HepG2 (cell line): ENCODE measurements at regions of chr14 and their contacts with region 1.

Region 1: GRCh38 chr14:76250302-76250701 is 98.6 kb downstream of the GPATCH2L start:
- DNase-seq: no peak
- ATAC-seq: no peak
- H3K4me3 ChIP-seq: no peak overlapping the region
- H3K27ac ChIP-seq: no peak overlapping the region
- H3K4me1 ChIP-seq: peaks cover 7% of the 10 kb centered on the region; the same call in 1 of the 2 replicates
- H3K27me3 ChIP-seq: no peaks in the 10 kb centered on the region
- CTCF ChIP-seq: no peak
- EP300 ChIP-seq: no peak
- POLR2A ChIP-seq: no peak
- RAD21 ChIP-seq: no peak

Region 2: DNA sequence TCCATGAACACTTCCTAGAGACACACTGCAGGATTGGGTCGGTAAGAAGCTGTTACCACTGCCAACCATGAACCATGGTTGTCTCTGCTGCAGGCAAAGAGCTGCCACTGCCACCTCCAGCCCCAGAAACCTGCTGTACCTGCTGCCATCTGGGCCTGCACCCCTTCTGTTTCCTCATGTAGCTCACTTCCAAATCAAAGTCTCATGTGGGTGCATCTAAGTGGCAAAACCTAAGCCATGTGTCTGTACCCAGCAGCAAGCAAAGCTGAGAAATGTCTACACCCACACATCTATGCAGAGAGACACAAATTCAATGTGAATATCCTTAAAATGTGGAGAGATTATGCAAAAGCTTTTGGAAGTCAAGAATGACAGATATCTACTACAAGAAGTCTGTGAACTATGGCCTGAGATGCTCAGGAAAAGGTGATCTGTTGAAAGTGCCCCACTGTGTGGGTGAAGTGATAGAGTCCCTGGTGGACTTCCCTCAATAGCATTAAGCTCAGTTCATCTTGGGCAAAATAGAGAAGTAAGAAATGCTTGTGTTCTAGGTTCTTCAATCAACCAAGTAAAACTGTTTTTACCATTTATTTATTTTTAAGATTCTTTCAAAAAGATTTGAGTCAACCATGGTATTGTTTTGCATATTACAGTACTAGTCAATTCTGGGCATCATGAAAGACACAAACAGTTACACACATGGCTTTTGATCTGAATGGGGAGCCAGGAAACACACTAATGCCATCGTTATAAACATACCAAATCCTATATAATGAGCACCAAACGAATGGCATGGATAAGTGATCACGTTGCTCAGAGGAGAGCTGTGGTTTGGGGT is 907.3 kb before region 1 on chr14:
- CTCF ChIA-PET with region 1: no interaction called
- POLR2A ChIA-PET with region 1: no interaction called
- in situ Hi-C with region 1: no loop called
- intact Hi-C with region 1: no loop called
- DNase-seq: no peak
- ATAC-seq: no peak
- H3K4me3 ChIP-seq: no peak overlapping the region
- H3K27ac ChIP-seq: no peak overlapping the region
- H3K4me1 ChIP-seq: no peaks in the 10 kb centered on the region
- H3K27me3 ChIP-seq: peaks cover 0 to 8% of the 10 kb centered on the region in 2 experiments; a peak in 1 of 5 replicates
- CTCF ChIP-seq: no peak
- EP300 ChIP-seq: no peak
- POLR2A ChIP-seq: no peak
- RAD21 ChIP-seq: no peak

Region 3: DNA sequence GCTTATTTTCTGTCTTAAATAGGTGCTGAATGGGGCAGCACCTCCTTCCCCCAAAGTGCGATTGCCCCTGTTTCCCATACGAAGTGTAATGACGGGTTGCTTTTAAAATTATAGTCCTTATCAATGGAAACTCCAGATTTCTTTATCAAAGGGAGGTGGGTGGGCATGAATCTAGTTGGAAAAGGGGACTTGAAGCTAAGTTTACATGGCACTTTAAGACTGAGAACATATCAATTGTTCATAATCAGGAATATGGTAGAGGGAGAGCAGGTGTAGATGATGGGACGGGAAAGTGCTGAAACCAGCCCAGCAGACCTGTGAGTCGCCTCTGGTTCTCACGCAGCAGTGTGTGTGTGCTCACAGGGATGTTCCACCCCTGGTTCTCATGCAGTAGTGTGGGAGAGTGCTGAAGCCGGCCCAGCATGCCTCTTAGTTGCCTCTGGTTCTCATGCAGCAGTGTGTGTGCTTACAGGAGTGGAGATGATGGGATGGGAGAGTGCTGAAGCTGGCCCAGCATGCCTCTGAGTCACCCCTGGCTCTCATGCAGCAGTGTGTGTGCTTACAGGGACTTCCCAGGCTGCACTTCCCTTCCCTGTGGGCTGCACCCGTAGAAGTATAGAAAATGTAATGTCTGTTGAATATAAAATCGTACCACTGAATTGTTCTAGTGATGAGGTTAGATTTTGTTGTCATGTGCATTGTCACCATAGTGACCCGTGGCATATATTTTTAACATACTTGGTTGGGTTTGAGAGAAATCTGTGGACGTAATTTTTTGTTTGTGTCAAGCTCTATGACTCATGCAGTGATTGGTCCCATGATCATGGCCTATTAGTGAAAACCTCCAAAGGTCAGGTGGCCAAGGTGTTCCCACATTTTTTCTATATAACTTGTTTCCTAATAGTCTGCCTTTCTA is 47.0 kb before region 1 on chr14:
- CTCF ChIA-PET with region 1: no interaction called
- POLR2A ChIA-PET with region 1: no interaction called
- in situ Hi-C with region 1: no loop called
- intact Hi-C with region 1: no loop called
- DNase-seq: no peak
- ATAC-seq: peak; percentile 77
- H3K4me3 ChIP-seq: no peak overlapping the region
- H3K27ac ChIP-seq: no peak overlapping the region
- H3K4me1 ChIP-seq: peaks cover 13% of the 10 kb centered on the region
- H3K27me3 ChIP-seq: no peaks in the 10 kb centered on the region
- CTCF ChIP-seq: no peak
- EP300 ChIP-seq: no peak
- POLR2A ChIP-seq: no peak
- RAD21 ChIP-seq: no peak

Region 4: GRCh38 chr14:76525106-76525821 is 275.0 kb after region 1 on chr14:
- CTCF ChIA-PET with region 1: no interaction called
- POLR2A ChIA-PET with region 1: no interaction called
- in situ Hi-C with region 1: no loop called
- intact Hi-C with region 1: no loop called
- DNase-seq: no peak
- ATAC-seq: no peak
- H3K4me3 ChIP-seq: no peak overlapping the region
- H3K27ac ChIP-seq: no peak overlapping the region
- H3K4me1 ChIP-seq: no peaks in the 10 kb centered on the region
- H3K27me3 ChIP-seq: peaks cover 0 to 10% of the 10 kb centered on the region in 2 experiments; a peak in 2 of 5 replicates
- CTCF ChIP-seq: no peak
- EP300 ChIP-seq: no peak
- POLR2A ChIP-seq: no peak
- RAD21 ChIP-seq: no peak

Region 5: DNA sequence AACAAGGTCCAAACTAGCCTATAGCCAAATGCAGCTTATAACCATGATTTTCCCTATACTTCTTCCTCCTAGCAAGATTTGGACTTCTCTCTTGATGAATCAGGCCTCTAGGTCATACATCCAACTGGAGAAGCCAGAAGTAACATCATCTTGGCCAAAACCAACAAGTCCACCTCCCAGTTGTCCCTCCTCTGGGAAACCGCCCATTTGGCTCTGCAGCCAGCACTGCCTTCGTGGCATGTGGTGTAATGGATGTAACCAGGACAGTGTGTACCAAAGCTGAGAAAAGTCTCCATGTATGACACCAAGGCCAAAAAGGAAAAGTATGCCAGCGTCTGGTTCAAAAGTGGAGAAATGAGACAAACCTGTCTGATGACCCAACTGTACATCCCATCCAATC is 451.7 kb after region 1 on chr14:
- CTCF ChIA-PET with region 1: no interaction called
- POLR2A ChIA-PET with region 1: no interaction called
- in situ Hi-C with region 1: no loop called
- intact Hi-C with region 1: loop called (anchors 5 kb)
- DNase-seq: no peak
- ATAC-seq: no peak
- H3K4me3 ChIP-seq: no peak overlapping the region
- H3K27ac ChIP-seq: no peak overlapping the region
- H3K4me1 ChIP-seq: peaks cover 4% of the 10 kb centered on the region; the same call in 1 of the 2 replicates
- H3K27me3 ChIP-seq: peaks cover 0 to 8% of the 10 kb centered on the region in 2 experiments; a peak in 1 of 5 replicates
- CTCF ChIP-seq: no peak
- EP300 ChIP-seq: no peak
- POLR2A ChIP-seq: no peak
- RAD21 ChIP-seq: no peak